GM12878 (cell line): ENCODE measurements at regions of chr11 and their contacts with region 1.

Region 1: GRCh38 chr11:1917671-1918516 is 1.6 kb upstream of the TNNT3 start:
- DNase-seq: no peak
- ATAC-seq: peak; percentile 64
- H3K4me3 ChIP-seq: no peak overlapping the region
- H3K27ac ChIP-seq: no peak overlapping the region
- H3K4me1 ChIP-seq: no peaks in the 10 kb centered on the region
- H3K27me3 ChIP-seq: no peaks in the 10 kb centered on the region
- CTCF ChIP-seq: peak; percentile 21 to 66 (median 39); a peak in 5 of 6 replicates
- EP300 ChIP-seq: no peak
- POLR2A ChIP-seq: peak; percentile 54; the same call in 1 of the 2 replicates
- RAD21 ChIP-seq: peak; percentile 21; the same call in 1 of the 2 replicates

Region 2: GRCh38 chr11:1837171-1838076 is 80.5 kb before region 1 on chr11:
- CTCF ChIA-PET with region 1: no interaction called
- POLR2A ChIA-PET with region 1: no interaction called
- RAD21 ChIA-PET with region 1: interaction called, 3 read pairs
- SMC1A ChIA-PET with region 1: interaction called, 4 read pairs
- in situ Hi-C with region 1: no loop called
- intact Hi-C with region 1: loop called (anchors 2 kb)
- DNase-seq: no peak
- ATAC-seq: peak; percentile 89
- H3K4me3 ChIP-seq: no peak overlapping the region; the same call in 1 of the 2 replicates
- H3K27ac ChIP-seq: no peak overlapping the region
- H3K4me1 ChIP-seq: peaks cover 15% of the 10 kb centered on the region
- H3K27me3 ChIP-seq: no peaks in the 10 kb centered on the region; a peak in 1 of 4 replicates
- CTCF ChIP-seq: peak; percentile 91 to 96 (median 94)
- EP300 ChIP-seq: no peak
- POLR2A ChIP-seq: no peak
- RAD21 ChIP-seq: peak; percentile 96

Region 3: GRCh38 chr11:1882519-1883238 is 35.2 kb before region 1 on chr11:
- CTCF ChIA-PET with region 1: interaction called, 10 read pairs
- POLR2A ChIA-PET with region 1: no interaction called
- RAD21 ChIA-PET with region 1: no interaction called
- SMC1A ChIA-PET with region 1: no interaction called
- in situ Hi-C with region 1: loop called (anchors 5 kb)
- intact Hi-C with region 1: no loop called
- DNase-seq: no peak
- ATAC-seq: peak; percentile 96
- H3K4me3 ChIP-seq: no peak overlapping the region
- H3K27ac ChIP-seq: no peak overlapping the region
- H3K4me1 ChIP-seq: no peaks in the 10 kb centered on the region; the same call in 1 of the 2 replicates
- H3K27me3 ChIP-seq: no peaks in the 10 kb centered on the region
- CTCF ChIP-seq: peak; percentile 84 to 93 (median 92)
- EP300 ChIP-seq: no peak
- POLR2A ChIP-seq: peak; percentile 45; the same call in 1 of the 2 replicates
- RAD21 ChIP-seq: peak; percentile 68

Region 4: GRCh38 chr11:1889224-1890120 is 28.4 kb before region 1 on chr11:
- CTCF ChIA-PET with region 1: interaction called, 3 read pairs
- POLR2A ChIA-PET with region 1: no interaction called
- RAD21 ChIA-PET with region 1: no interaction called
- SMC1A ChIA-PET with region 1: no interaction called
- in situ Hi-C with region 1: loop called (anchors 5 kb)
- intact Hi-C with region 1: loop called (anchors 1 kb)
- DNase-seq: no peak
- ATAC-seq: no peak
- H3K4me3 ChIP-seq: no peak overlapping the region
- H3K27ac ChIP-seq: no peak overlapping the region
- H3K4me1 ChIP-seq: no peaks in the 10 kb centered on the region
- H3K27me3 ChIP-seq: no peaks in the 10 kb centered on the region
- CTCF ChIP-seq: no peak
- EP300 ChIP-seq: no peak
- POLR2A ChIP-seq: peak; percentile 38
- RAD21 ChIP-seq: no peak